Heart right ventricle (tissue), 16 donors: ENCODE measurements at regions of chr5 and their contacts with region 1.

Region 1: DNA sequence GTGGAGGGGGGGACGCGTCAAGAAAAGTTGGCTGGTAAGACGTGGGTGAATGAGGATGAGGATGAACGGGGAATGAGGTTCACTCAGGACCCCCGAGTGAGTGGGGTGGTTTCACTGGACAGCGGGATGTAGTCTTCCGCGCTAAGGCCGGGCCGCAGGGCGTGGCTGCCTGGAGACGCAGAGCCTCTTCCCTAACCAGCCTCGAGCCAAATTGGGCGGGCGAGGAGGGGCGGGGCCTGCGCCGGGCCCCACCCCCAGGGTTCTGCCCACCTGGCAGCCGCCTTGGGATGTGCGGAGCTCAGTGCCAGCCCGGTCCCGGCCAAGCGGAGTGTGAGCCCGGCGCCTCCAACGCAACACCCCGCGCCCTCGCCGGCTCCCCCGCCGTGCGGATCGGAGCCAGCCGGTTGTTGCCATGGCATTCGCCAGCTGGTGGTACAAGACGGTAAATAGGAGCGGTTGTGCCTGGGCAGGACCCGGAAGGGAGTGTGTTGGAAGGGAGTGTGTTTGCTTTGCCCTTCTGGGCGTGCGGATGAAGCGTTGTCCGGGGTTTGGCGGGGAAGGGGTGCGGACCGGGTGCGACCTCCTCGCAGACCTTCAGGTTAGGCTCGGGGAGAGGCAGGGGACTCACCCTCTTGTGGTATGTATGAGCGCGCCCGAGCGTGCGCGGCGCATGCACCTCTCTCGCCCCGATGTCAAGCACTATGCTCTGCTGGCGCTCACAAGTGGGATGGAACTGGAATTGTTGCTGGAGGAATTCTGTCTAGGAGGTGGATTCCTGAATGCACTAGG is 743 bp downstream of the CAST start:
- DNase-seq: peak; percentile 90 to 94
- ATAC-seq: peak; percentile 92 to 97 (median 94)
- H3K4me3 ChIP-seq: peak overlapping the region; percentile 72 to 98 (median 94)
- H3K27ac ChIP-seq: peak overlapping the region; percentile 82 to 100 (median 98)
- H3K4me1 ChIP-seq: peaks cover 0 to 45% (median 27%) of the 10 kb centered on the region in 9 donors
- H3K27me3 ChIP-seq: no peaks in the 10 kb centered on the region
- CTCF ChIP-seq: peak in 1 of 9 donors; percentile 10

Region 2: GRCh38 chr5:96415897-96416296 is 247.0 kb before region 1 on chr5:
- intact Hi-C with region 1: no loop called
- DNase-seq: no peak
- ATAC-seq: no peak
- H3K4me3 ChIP-seq: no peak overlapping the region
- H3K27ac ChIP-seq: no peak overlapping the region
- H3K4me1 ChIP-seq: peaks cover 0 to 4% (median 0%) of the 10 kb centered on the region in 9 donors
- H3K27me3 ChIP-seq: no peaks in the 10 kb centered on the region
- CTCF ChIP-seq: no peak

Region 3: GRCh38 chr5:96629774-96630173 is 33.1 kb before region 1 on chr5:
- intact Hi-C with region 1: loop called in 1 of 10 experiments (anchors 5 kb)
- DNase-seq: no peak
- ATAC-seq: peak in 7 of 8 donors; percentile 49 to 84 (median 68)
- H3K4me3 ChIP-seq: no peak overlapping the region
- H3K27ac ChIP-seq: peak overlapping the region in 4 of 10 donors; percentile 5 to 38 (median 14)
- H3K4me1 ChIP-seq: peaks cover 0 to 13% (median 7%) of the 10 kb centered on the region in 9 donors
- H3K27me3 ChIP-seq: no peaks in the 10 kb centered on the region
- CTCF ChIP-seq: no peak

Region 4: GRCh38 chr5:96702503-96703383 is 39.8 kb after region 1 on chr5:
- intact Hi-C with region 1: loop called in 5 of 10 experiments (anchors 1 to 5 kb)
- DNase-seq: peak; percentile 94 to 95
- ATAC-seq: peak; percentile 97 to 99 (median 98)
- H3K4me3 ChIP-seq: peak overlapping the region; percentile 55 to 84 (median 72)
- H3K27ac ChIP-seq: peak overlapping the region; percentile 90 to 98 (median 95)
- H3K4me1 ChIP-seq: peaks cover 0 to 80% (median 46%) of the 10 kb centered on the region in 9 donors
- H3K27me3 ChIP-seq: no peaks in the 10 kb centered on the region
- CTCF ChIP-seq: no peak

Region 5: DNA sequence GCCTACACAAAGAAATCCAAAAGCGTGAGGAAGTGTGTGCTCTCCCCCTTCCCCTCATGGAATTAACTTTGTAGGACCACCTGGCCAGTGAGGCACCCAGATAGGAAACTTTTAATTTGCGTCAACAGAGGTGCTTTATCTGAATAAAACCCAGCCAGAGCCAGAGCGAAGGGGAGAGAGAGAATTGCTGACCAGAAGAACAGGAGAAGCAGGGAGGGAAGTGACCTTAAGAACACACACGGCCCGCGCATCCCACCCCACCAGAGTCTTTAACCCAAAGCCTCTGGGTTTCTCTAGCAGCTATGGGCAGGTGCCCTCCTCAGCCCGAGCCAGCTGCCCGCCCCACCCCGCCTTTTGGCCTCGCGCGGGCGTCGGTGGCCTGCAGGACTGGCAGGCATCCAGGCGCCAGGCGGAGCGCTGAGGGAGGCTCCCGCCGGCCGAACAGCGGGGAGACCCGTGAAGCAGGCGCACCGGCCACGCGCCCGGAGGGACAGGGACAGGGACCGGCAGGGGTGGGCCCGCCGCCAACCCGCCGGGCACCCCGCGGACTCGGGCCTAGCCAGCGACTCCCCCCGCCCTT is 144.2 kb after region 1 on chr5:
- intact Hi-C with region 1: no loop called
- DNase-seq: peak; percentile 82 to 88
- ATAC-seq: peak; percentile 67 to 90 (median 73)
- H3K4me3 ChIP-seq: peak overlapping the region; percentile 73 to 93 (median 86)
- H3K27ac ChIP-seq: peak overlapping the region; percentile 95 to 100 (median 100)
- H3K4me1 ChIP-seq: peaks cover 0 to 55% (median 20%) of the 10 kb centered on the region in 9 donors
- H3K27me3 ChIP-seq: no peaks in the 10 kb centered on the region
- CTCF ChIP-seq: peak in 1 of 9 donors; percentile 7